ENCODE measurements at regions of chr15 and their contacts with region 1.

Region 1: GRCh38 chr15:55221090-55222011 is 24.6 kb upstream of the RSL24D1 start:
- DNase-seq: no peak
- ATAC-seq: peak; percentile 59
- H3K4me3 Mint-ChIP-seq: peak overlapping the region; percentile 49
- H3K27ac Mint-ChIP-seq: peak overlapping the region; percentile 47
- H3K4me1 Mint-ChIP-seq: peaks cover 67% of the 10 kb centered on the region
- H3K27me3 Mint-ChIP-seq: no peaks in the 10 kb centered on the region
- CTCF ChIP-seq: no peak

Region 2: DNA sequence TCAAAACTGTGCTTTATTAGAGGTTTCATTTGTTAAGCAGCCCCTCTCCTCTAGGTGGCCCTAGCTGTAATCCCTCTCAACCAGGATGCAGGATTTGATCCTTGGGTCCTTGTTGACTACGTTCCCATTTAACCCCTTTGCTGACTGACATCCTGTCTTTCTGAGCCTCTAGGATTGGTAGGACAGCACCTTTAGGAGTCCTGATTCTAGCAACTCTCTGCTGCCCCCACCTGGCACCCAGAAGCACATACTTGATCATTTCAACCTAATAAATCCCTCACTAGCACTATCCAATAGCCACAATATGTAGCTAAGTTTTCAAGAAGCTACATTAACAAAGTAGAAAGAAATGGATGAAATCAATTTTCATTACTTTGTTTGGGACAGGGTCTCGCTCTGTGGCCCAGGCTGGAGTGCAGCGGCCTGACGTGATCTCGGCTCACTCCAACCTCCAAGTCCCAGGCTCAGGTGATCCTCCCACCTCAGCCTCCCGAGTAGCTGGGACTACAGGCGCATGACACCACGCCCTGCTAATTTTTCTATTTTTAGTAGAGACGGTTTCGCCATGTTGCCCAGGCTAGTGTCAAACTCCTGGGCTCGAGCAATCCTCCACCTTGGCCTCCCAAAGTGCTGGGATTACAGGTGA is 52.9 kb before region 1 on chr15:
- CTCF ChIA-PET with region 1: no interaction called
- POLR2A ChIA-PET with region 1: no interaction called
- intact Hi-C with region 1: loop called (anchors 10 kb)
- DNase-seq: no peak
- ATAC-seq: peak; percentile 71
- H3K4me3 Mint-ChIP-seq: no peak overlapping the region
- H3K27ac Mint-ChIP-seq: no peak overlapping the region
- H3K4me1 Mint-ChIP-seq: no peaks in the 10 kb centered on the region
- H3K27me3 Mint-ChIP-seq: no peaks in the 10 kb centered on the region
- CTCF ChIP-seq: no peak

Region 3: DNA sequence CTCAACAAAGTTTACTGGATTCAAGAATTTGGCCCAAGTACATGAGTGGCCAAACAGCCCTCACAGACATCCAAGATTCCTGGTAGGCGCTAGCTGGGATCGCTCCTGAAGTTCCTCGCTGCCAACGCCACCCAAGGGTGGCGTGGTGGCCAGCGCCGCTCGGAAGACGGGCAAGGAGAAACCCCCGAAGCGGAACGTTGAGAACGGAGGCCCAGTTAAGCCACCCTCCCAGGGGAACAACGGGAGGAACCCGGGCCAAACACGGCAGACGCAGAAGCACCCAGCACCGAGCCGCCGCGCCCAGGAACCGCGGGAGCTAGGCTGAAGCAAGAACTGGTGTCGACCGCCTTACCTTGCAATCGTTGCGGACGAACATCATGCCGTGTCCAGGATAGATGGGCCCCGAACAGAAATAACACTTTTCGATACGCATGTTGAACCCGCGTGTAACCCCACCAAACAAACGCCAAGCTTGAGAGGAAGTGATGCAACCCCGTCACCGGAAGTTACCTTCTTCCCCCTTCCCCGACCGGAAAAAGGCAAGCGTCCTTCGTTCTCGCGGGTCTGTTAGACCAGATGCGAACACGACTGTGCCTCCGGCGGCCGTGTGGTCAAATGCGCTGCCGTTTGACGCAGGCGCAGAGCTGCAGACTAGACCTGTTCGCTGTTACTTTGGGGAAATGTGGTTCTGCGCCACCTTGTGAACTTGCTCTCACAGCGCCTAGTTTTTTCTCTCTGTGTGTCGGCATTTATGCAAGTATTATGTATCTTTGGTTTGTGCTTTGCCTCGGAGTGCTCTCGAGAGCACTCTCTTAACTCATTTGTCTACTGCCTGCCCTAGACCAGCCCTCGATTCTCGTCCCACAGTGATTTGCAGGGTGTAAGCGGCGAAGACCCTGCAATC is 24.6 kb before region 1 on chr15 and contains the start of gene RSL24D1:
- CTCF ChIA-PET with region 1: interaction called, 7 read pairs
- POLR2A ChIA-PET with region 1: interaction called, 22 read pairs
- intact Hi-C with region 1: loop called (anchors 1 kb)
- DNase-seq: peak; percentile 84
- ATAC-seq: peak; percentile 95
- H3K4me3 Mint-ChIP-seq: no peak within 1 kb of the TSS
- H3K27ac Mint-ChIP-seq: no peak within 1 kb of the TSS
- H3K4me1 Mint-ChIP-seq: peaks cover 9% of the 10 kb centered on the region
- H3K27me3 Mint-ChIP-seq: no peaks in the 10 kb centered on the region
- CTCF ChIP-seq: no peak
- total RNA-seq, gene RSL24D1: 90.0 and 99.5 TPM in 2 replicates

Region 4: DNA sequence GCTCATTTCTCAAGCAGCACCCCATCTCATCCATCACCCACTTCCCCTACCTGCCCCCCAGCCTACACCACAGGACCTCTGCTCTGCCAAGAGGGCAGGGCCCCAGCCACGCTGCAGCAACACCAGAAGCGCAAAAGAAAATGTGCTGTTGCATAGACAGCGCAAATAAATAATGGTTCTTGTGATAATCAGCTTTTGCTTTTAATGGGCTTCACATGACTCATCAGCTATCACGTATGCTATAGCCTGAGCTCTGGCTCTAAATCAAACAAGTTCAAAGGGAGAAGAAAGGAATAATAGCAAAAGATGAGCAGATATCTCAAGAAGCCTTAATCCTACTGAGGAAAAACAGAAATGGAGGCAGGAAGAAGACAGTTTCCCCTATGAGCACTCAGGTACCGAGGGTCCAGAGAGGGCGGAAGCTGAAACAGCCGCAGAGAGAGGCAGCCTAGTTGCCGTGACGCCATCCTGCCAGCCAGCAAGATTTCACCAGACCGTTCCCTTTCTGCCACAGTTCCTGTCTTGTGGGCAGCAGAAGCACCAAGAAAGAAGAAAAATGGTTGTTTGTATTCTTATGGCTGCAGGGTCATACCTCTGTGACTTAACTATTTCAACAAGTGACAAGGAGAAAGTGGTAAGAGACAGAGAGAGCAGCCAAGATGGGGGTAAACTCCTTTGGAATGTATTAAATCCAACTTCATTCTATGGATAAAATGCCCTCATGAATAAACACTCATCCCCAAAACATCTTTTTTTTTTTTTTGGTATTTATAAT is 46.2 kb after region 1 on chr15:
- CTCF ChIA-PET with region 1: interaction called, 5 read pairs
- POLR2A ChIA-PET with region 1: interaction called, 9 read pairs
- intact Hi-C with region 1: loop called (anchors 1 kb)
- DNase-seq: peak; percentile 39
- ATAC-seq: peak; percentile 98
- H3K4me3 Mint-ChIP-seq: peak overlapping the region; percentile 82
- H3K27ac Mint-ChIP-seq: peak overlapping the region; percentile 96
- H3K4me1 Mint-ChIP-seq: peaks cover 26% of the 10 kb centered on the region
- H3K27me3 Mint-ChIP-seq: no peaks in the 10 kb centered on the region
- CTCF ChIP-seq: no peak

Region 5: GRCh38 chr15:55318588-55319494 is 97.5 kb after region 1 on chr15 and contains the starts of genes PIGB and PIGBOS1:
- CTCF ChIA-PET with region 1: interaction called, 4 read pairs
- POLR2A ChIA-PET with region 1: interaction called, 8 read pairs
- intact Hi-C with region 1: loop called (anchors 1 kb)
- DNase-seq: peak; percentile 75
- ATAC-seq: peak; percentile 86
- H3K4me3 Mint-ChIP-seq: peak within 1 kb of the TSS; percentile 99
- H3K27ac Mint-ChIP-seq: peak within 1 kb of the TSS; percentile 99
- H3K4me1 Mint-ChIP-seq: peaks cover 68% of the 10 kb centered on the region
- H3K27me3 Mint-ChIP-seq: no peaks in the 10 kb centered on the region
- CTCF ChIP-seq: no peak
- total RNA-seq, gene PIGB: 29.8 and 31.2 TPM in 2 replicates
- total RNA-seq, gene PIGBOS1: 10.7 and 12.6 TPM in 2 replicates

Region 6: GRCh38 chr15:55434989-55435825 is 213.9 kb after region 1 on chr15:
- CTCF ChIA-PET with region 1: interaction called, 21 read pairs
- POLR2A ChIA-PET with region 1: no interaction called
- intact Hi-C with region 1: loop called (anchors 1 kb)
- DNase-seq: no peak
- ATAC-seq: no peak
- H3K4me3 Mint-ChIP-seq: no peak overlapping the region
- H3K27ac Mint-ChIP-seq: no peak overlapping the region
- H3K4me1 Mint-ChIP-seq: no peaks in the 10 kb centered on the region
- H3K27me3 Mint-ChIP-seq: no peaks in the 10 kb centered on the region
- CTCF ChIP-seq: no peak

Measured in activated B cell treated with CpG ODN at 0.5 μM for 24 hours (primary cell).